ENCODE measurements at regions of chrX and their contacts with region 1.

Region 1: GRCh38 chrX:135484641-135485289 is 35.7 kb upstream of the INTS6L start:
- DNase-seq: peak; percentile 57
- ATAC-seq: peak; percentile 71
- H3K4me3 ChIP-seq: no peak overlapping the region
- H3K27ac ChIP-seq: no peak overlapping the region
- H3K4me1 ChIP-seq: no peaks in the 10 kb centered on the region
- H3K27me3 ChIP-seq: no peaks in the 10 kb centered on the region; the same call in 1 of the 2 replicates
- CTCF ChIP-seq: peak; percentile 71
- POLR2A ChIP-seq: no peak
- RAD21 ChIP-seq: peak; percentile 79

Region 2: DNA sequence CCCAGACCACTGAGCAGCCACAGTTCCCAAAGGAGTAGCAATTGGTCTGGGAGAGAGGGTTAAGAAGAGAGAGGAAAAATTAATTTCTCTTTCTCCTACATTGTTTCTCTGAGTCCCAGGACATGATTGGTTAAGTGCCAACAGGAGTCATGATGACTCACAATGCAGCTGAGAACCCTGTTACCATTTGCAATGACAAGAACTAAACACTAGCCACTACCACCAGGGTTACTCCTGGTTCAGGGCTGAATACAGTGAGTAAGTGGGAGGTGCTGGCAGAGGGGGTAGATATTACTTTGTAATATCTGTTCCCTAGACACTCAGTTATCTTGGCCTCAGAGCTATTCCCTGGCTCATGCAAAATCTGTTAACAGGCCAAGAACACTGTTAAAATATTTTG is 157.5 kb before region 1 on chrX:
- CTCF ChIA-PET with region 1: no interaction called
- POLR2A ChIA-PET with region 1: no interaction called
- dilution Hi-C with region 1: no loop called
- in situ Hi-C with region 1: no loop called
- intact Hi-C with region 1: no loop called
- DNase-seq: peak; percentile 94
- ATAC-seq: peak; percentile 96
- H3K4me3 ChIP-seq: no peak overlapping the region
- H3K27ac ChIP-seq: no peak overlapping the region
- H3K4me1 ChIP-seq: peaks cover 4% of the 10 kb centered on the region; the same call in 1 of the 2 replicates
- H3K27me3 ChIP-seq: no peaks in the 10 kb centered on the region
- CTCF ChIP-seq: 0 out of 2 replicates have a peak, but pooled peaks have one; percentile 4
- POLR2A ChIP-seq: no peak
- RAD21 ChIP-seq: no peak

Region 3: DNA sequence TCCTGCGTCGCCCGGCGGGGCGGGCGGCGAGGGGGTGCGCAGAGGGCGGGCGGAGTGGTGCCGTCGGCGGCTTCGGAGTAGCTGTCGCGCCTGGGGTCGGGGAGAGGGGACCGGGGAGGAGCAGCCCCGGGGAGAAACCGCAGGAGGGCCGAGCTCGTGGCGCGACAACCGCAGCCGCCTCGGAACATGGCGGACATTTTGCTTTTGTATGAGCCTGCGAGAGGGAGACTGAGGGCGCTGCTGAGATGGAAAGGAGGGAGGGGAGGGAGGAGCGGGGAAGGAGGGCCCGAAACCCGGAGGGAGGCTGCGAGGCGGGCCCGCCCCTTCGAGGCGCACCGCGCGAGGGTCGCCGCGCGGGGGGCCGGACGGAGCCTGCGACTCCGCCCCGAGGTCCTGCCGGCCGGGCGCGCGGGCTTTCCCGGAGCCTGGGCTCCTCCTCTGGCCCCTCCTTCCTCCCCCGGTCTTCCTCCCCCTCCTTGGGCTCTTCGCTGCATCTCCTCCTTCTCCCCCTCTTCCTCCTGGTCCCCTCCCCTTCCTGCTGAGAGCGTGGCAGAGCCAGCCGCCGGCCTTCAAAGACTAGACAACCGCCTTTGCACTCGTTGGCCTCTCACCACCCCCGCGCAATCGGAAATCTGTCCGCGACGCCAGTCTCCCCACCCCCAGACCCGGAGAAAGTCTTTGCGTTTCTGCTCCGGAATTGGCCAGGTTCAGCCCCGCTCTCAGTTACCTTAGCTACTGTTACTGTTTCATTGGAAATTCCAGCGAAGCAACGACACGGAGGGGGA is 36.8 kb after region 1 on chrX:
- CTCF ChIA-PET with region 1: no interaction called
- POLR2A ChIA-PET with region 1: no interaction called
- dilution Hi-C with region 1: no loop called
- in situ Hi-C with region 1: no loop called
- intact Hi-C with region 1: loop called (anchors 5 kb)
- DNase-seq: peak; percentile 85
- ATAC-seq: peak; percentile 91
- H3K4me3 ChIP-seq: peak overlapping the region; percentile 88
- H3K27ac ChIP-seq: peak overlapping the region; percentile 83
- H3K4me1 ChIP-seq: no peaks in the 10 kb centered on the region
- H3K27me3 ChIP-seq: no peaks in the 10 kb centered on the region
- CTCF ChIP-seq: no peak
- POLR2A ChIP-seq: peak; percentile 60; the same call in 1 of the 2 replicates
- RAD21 ChIP-seq: no peak

Region 4: GRCh38 chrX:135572436-135572835 is 87.7 kb after region 1 on chrX:
- CTCF ChIA-PET with region 1: interaction called, 4 read pairs
- POLR2A ChIA-PET with region 1: no interaction called
- dilution Hi-C with region 1: no loop called
- in situ Hi-C with region 1: no loop called
- intact Hi-C with region 1: loop called (anchors 1 kb)
- DNase-seq: peak; percentile 1
- ATAC-seq: no peak
- H3K4me3 ChIP-seq: no peak overlapping the region
- H3K27ac ChIP-seq: no peak overlapping the region
- H3K4me1 ChIP-seq: no peaks in the 10 kb centered on the region
- H3K27me3 ChIP-seq: no peaks in the 10 kb centered on the region
- CTCF ChIP-seq: peak; percentile 54
- POLR2A ChIP-seq: no peak
- RAD21 ChIP-seq: peak; percentile 35

Region 5: DNA sequence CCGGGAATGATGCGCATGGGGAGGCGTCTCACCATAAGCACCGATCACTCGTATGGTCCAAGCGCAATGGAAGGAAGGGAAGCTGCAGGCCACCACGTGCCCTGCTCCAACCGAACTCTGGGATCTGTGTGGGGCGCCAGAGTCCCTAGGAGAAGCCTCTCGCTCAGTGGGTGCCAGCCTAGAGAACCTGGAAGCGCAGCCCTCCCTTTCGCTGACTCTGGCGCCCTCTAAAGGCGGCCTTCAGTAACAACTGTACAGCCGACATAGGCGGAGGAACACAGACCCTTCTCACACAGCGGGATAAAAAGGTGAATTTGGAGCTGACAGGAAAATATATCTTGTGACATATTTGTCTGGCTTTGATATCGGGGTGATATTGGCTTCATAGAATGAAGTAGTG is 111.7 kb after region 1 on chrX:
- CTCF ChIA-PET with region 1: interaction called, 3 read pairs
- POLR2A ChIA-PET with region 1: no interaction called
- dilution Hi-C with region 1: no loop called
- in situ Hi-C with region 1: no loop called
- intact Hi-C with region 1: loop called (anchors 1 kb)
- DNase-seq: peak; percentile 16
- ATAC-seq: peak; percentile 84
- H3K4me3 ChIP-seq: no peak overlapping the region
- H3K27ac ChIP-seq: no peak overlapping the region
- H3K4me1 ChIP-seq: no peaks in the 10 kb centered on the region
- H3K27me3 ChIP-seq: peaks cover 1% of the 10 kb centered on the region; the same call in 1 of the 2 replicates
- CTCF ChIP-seq: peak; percentile 55
- POLR2A ChIP-seq: no peak
- RAD21 ChIP-seq: peak; percentile 61

Measured in IMR-90 (cell line).